ENCODE measurements at regions of chrX and their contacts with region 1.

Region 1: DNA sequence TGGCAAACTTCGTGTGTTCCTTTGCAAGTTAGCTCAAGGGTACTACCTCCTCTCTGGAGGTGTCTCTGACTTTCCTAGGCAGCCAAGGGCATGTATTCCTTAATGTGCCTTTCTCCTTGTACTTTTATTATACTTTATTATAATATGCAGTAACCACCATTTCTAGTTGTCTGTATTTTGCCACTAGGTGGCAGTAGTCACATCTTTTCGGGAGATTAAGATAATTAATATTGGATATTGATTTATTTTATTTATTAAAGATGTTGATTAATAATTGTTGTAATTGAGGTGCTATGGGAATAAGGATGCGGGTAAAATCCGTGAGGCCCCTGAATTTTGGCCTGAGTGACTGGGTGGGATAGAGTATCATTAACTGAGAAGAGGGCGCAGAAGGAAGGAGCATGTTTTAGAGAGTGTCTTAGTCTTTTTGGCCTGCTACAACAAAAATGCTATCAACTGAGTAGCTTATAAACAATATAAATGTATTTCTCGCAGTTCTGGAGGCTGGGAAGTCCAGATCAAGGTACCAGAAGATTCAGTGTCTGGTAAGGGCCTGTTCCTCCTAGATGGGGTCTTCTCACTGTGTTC is 153.3 kb downstream of the TMEM164 start:
- DNase-seq: no peak
- H3K4me3 ChIP-seq: no peak overlapping the region
- H3K27ac ChIP-seq: no peak overlapping the region
- H3K4me1 ChIP-seq: no peaks in the 10 kb centered on the region
- H3K27me3 ChIP-seq: no peaks in the 10 kb centered on the region
- CTCF ChIP-seq: peak in 1 of 3 experiments; percentile 65
- POLR2A ChIP-seq: no peak

Region 2: DNA sequence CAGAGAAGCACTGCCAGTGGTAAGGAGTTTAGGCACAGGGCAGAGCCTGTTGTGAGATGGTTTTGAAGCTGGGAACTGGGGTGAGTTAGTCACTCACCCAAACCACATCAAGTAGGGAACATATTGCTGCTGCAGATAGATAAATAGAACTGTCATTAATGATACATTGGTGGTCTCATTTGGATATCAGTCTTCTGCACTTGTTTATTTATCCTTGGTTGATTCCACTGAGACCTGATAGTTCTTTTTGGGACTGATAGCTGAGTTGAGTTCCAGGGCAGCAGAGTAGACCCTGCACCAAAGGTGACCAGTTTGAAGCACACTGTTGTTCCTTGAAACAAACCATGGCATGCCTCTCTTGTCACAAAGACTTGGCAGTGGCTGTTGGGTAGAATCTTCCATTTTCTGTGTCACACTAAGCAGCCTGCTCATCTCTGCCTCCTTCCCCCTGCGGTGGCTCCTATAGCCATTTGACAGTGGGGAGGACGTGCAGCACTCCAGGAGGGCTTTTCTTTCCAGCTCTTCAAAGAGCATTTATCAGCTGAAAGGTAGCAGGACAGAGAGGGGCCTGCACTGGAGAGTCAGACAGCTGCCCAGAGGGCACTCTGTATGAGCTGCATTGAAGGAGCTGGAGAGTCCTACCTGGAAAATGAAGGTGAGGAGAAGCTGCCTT is 213.0 kb before region 1 on chrX:
- intact Hi-C with region 1: no loop called
- DNase-seq: no peak
- H3K4me3 ChIP-seq: no peak overlapping the region
- H3K27ac ChIP-seq: no peak overlapping the region
- H3K4me1 ChIP-seq: no peaks in the 10 kb centered on the region
- H3K27me3 ChIP-seq: no peaks in the 10 kb centered on the region
- CTCF ChIP-seq: no peak
- POLR2A ChIP-seq: no peak

Region 3: DNA sequence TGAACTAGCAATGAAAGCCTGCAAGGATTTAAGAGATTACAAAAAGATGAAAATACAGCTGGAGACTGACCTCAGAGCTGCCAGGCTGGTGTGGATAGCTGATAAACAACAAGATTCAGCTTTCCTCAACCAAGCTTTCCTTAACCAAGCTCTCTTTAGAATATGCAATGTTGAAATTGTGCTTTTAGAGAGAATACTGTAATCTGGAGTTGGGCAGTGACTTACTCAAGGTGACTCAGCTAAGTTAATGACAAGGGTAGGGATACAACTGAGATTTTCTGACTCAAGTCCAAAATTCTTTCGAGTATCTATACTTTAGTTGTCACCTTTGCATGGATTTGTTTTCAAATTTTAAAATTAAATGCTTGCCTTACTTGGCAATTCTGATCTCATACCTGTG is 63.7 kb after region 1 on chrX:
- intact Hi-C with region 1: no loop called
- DNase-seq: no peak
- H3K4me3 ChIP-seq: no peak overlapping the region
- H3K27ac ChIP-seq: no peak overlapping the region
- H3K4me1 ChIP-seq: no peaks in the 10 kb centered on the region
- H3K27me3 ChIP-seq: no peaks in the 10 kb centered on the region
- CTCF ChIP-seq: no peak
- POLR2A ChIP-seq: no peak

Region 4: DNA sequence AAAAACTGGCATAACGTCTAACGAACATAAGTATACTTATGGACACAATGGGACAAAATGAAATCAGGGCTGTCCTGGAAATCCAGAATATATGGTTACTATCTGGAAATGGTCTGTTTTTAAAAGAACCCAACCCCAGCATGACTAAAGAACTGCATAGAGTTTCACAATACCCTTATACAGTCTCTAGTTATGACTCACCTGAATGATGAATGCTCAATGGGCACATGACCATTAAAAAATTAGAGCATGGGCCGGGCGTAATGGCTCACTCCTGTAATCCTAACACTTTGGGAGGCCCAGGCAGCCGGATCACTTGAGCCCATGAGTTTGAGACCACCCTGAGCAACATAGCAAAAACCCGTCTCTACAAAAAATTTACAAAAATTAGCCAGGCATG is 129.9 kb after region 1 on chrX:
- intact Hi-C with region 1: no loop called
- DNase-seq: no peak
- H3K4me3 ChIP-seq: no peak overlapping the region
- H3K27ac ChIP-seq: no peak overlapping the region
- H3K4me1 ChIP-seq: no peaks in the 10 kb centered on the region
- H3K27me3 ChIP-seq: no peaks in the 10 kb centered on the region
- CTCF ChIP-seq: no peak
- POLR2A ChIP-seq: no peak

Region 5: GRCh38 chrX:110418316-110419235 is 262.3 kb after region 1 on chrX:
- intact Hi-C with region 1: loop called (anchors 5 kb)
- DNase-seq: peak; percentile 45
- H3K4me3 ChIP-seq: no peak overlapping the region
- H3K27ac ChIP-seq: no peak overlapping the region
- H3K4me1 ChIP-seq: no peaks in the 10 kb centered on the region
- H3K27me3 ChIP-seq: no peaks in the 10 kb centered on the region
- CTCF ChIP-seq: peak in 2 of 3 experiments; percentile 32 to 44
- POLR2A ChIP-seq: no peak